A673 (cell line): ENCODE measurements at regions of chr19 and their contacts with region 1.

Region 1: DNA sequence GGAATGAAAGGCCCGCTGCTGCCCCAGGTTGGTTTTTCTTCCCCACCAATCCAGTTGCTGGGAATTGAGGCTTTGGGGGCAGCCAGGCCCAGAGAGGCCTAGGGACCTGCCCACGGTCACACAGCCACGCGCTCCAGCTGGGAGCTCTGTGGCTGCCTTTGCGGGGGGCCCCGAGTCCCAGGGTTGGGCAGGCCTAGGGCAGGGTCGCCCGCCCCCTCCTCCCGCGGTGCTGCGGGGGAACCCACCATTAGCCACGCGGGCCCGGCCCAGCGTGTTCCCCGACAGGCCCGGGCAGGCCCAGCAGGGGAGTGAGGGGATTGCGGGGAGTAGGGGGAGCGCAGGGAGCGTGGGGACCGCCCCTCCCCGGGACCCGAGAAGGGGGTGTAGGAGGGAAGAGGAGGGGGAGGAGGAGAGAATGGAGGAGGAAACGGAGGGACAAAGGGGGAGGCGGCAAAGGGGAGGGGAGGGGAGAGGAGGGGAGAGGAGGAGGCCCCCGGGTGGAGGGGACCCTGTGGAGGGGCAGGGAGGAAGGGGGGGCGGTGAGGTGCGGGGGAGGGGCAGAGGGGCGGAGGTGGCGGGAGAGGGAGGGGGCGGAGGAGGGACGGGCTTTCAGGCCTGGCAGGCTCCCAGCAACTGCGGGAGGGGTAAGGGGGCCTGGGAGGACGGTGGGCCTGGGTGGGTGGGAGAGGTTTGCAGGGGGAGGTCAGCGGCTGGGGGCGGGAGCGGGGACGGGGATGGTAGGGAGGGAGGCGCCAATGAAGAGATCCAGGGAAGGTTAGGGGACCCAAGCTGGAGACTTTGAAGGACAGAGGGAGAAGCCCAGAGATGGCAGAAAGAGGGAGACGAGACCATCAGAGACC is 12.9 kb upstream of the TLE2 start:
- DNase-seq: peak; percentile 73
- H3K4me3 ChIP-seq: peak overlapping the region; percentile 27
- H3K27ac ChIP-seq: peak overlapping the region; percentile 90
- H3K4me1 ChIP-seq: peaks cover 28% of the 10 kb centered on the region
- H3K27me3 ChIP-seq: no peaks in the 10 kb centered on the region
- CTCF ChIP-seq: no peak

Region 2: DNA sequence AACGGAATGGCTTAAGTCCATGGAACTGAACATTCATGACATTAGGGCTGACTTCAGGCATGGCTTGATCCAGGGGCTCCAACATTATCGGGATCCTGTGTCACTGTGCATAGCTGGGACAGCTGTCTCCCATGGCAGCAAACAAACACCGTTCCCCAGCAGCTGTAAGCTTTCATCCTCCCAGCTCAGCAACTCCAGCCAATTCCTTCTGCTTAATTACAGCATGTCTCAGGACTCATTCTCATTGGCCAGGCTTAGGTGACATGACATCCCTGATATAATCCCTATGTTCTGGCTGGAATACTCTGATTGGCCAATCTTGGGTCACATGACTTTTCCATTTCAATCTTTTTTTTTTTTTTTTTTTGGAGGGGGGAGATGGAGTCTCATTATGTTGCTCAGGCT is 31.2 kb after region 1 on chr19:
- CTCF ChIA-PET with region 1: interaction called, 6 read pairs
- POLR2A ChIA-PET with region 1: interaction called, 19 read pairs
- intact Hi-C with region 1: no loop called
- DNase-seq: peak; percentile 93
- H3K4me3 ChIP-seq: no peak overlapping the region
- H3K27ac ChIP-seq: no peak overlapping the region
- H3K4me1 ChIP-seq: peaks cover 11% of the 10 kb centered on the region
- H3K27me3 ChIP-seq: no peaks in the 10 kb centered on the region
- CTCF ChIP-seq: no peak